ENCODE measurements at regions of chr6 and their contacts with region 1.

Region 1: GRCh38 chr6:57221936-57222742 is at the start of gene RAB23:
- DNase-seq: peak; percentile 89
- H3K4me3 Mint-ChIP-seq: peak within 1 kb of the TSS; percentile 100
- H3K27ac Mint-ChIP-seq: peak within 1 kb of the TSS; percentile 77
- H3K4me1 Mint-ChIP-seq: peaks cover 7% of the 10 kb centered on the region
- H3K27me3 Mint-ChIP-seq: no peaks in the 10 kb centered on the region
- CTCF ChIP-seq: no peak
- total RNA-seq, gene RAB23: 10.9 and 11.0 TPM in 2 replicates

Region 2: GRCh38 chr6:57207141-57207540 is 15.0 kb before region 1 on chr6:
- CTCF ChIA-PET with region 1: no interaction called
- intact Hi-C with region 1: no loop called
- DNase-seq: no peak
- H3K4me3 Mint-ChIP-seq: no peak overlapping the region
- H3K27ac Mint-ChIP-seq: no peak overlapping the region
- H3K4me1 Mint-ChIP-seq: no peaks in the 10 kb centered on the region
- H3K27me3 Mint-ChIP-seq: no peaks in the 10 kb centered on the region
- CTCF ChIP-seq: no peak

Region 3: DNA sequence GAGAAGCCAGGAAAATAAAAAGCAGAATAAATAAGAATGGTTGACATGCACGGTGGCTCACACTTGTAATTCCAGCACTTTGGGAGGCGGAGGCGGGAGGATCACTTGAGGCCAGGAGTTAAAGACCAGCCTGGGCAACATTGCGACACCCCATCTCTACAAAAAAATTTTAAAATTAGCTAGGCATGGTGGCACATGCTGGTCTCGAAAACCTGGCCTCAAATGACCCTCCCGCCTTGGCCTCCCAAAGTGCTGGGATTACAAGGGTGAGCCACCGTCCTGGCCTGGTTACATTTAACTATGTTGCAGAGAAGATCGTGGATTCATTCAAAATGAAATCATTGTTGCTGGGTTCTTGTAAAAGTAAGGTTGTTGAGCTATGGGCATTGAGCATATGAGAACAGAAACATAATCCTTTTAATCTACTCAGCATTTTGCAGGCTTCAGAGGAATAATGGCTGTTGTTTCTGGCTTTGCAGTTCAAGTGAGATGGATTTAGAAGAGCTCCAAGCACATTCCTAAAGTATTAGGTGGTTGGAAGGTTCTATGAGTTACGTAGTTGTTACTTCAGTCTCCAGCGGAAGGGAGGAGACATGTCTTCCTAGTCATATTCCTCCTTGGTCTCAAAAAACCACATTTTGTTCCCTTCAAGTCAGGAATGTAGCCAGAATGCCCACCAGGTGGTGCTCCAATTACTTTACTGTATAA is 45.6 kb after region 1 on chr6:
- CTCF ChIA-PET with region 1: interaction called, 8 read pairs
- intact Hi-C with region 1: loop called (anchors 2 kb)
- DNase-seq: peak; percentile 68
- H3K4me3 Mint-ChIP-seq: no peak overlapping the region
- H3K27ac Mint-ChIP-seq: no peak overlapping the region
- H3K4me1 Mint-ChIP-seq: no peaks in the 10 kb centered on the region
- H3K27me3 Mint-ChIP-seq: peaks cover 12% of the 10 kb centered on the region
- CTCF ChIP-seq: peak; percentile 31